OCI-LY7 (cell line): ENCODE measurements at regions of chr14 and their contacts with region 1.

Region 1: GRCh38 chr14:50860478-50861086 is 11.3 kb upstream of the ABHD12B start:
- DNase-seq: peak; percentile 87
- H3K4me3 ChIP-seq: peak overlapping the region; percentile 68
- H3K27ac ChIP-seq: peak overlapping the region; percentile 62
- H3K4me1 ChIP-seq: peaks cover 39% of the 10 kb centered on the region
- CTCF ChIP-seq: peak; percentile 82

Region 2: DNA sequence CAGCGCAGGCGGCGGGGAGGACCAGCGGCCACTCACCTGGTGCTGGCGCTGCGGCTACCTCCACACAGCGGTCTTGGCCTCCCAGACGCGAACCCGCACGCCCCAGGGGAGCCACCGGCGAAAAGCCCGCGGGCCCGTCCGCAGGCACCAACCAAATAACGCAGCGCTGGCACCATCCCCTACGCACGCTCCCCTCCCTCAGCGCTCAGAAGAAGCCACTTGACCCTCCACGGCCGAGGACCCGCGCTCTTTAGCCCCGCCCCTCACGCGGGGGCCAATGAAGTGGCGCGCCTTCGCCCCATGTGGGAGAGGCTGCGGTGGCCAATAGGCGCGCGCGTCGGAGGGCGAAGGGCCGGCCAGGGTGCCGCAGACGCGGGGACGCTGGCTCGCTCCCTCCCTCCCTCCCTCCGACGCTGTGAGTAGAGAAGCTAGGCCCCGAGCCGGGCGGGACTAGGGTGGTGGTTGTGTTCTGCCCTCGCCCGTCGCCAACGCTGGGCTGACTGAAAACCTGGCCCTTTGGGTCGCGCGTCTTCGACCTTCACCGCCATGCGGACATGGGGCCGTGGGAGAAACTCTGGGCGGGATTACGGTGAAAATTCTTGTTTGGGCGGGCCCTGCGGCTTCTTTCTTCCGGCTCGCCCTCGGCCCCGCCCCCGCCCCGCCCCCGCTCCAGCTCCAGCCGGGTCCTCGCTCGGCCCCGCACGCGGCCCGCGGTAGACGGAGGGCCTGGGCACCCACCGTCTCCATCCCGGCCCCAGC is 548.4 kb before region 1 on chr14 and contains the starts of genes DMAC2L and L2HGDH:
- CTCF ChIA-PET with region 1: no interaction called
- POLR2A ChIA-PET with region 1: no interaction called
- intact Hi-C with region 1: loop called (anchors 5 kb)
- DNase-seq: peak; percentile 97
- H3K4me3 ChIP-seq: peak within 1 kb of the TSS; percentile 73
- H3K27ac ChIP-seq: peak within 1 kb of the TSS; percentile 77
- H3K4me1 ChIP-seq: peaks cover 16% of the 10 kb centered on the region
- CTCF ChIP-seq: 0 out of 2 replicates have a peak, but pooled peaks have one; percentile 3
- total RNA-seq, gene DMAC2L: 5.8 and 13.8 TPM in 2 replicates
- total RNA-seq, gene L2HGDH: 8.7 and 10.0 TPM in 2 replicates

Region 3: DNA sequence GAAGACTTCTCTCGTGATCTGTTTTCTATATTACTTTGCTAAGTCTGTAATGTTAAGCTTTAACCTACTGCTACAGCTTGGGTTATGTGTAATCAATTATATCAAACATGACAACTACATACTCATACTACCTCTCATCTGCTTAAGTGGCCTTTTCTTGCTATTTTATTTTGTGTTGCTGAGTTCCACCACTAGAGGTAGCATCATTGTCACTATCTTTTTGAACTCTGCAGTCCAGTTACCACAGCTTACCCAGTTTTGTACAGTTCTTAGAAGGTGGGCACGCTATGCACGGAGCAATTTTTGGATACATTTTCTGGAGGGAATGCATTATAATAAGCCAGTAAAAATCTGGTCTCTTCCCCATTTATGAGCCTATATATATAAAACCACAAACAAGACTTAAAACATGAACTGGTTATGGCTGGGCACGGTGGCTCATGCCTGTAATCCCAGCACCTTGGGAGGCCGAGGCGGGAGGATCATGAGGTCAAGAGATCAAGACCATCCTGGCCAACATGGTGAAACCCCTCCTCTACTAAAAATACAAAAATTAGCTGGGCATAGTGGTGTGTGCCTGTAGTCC is 240.9 kb before region 1 on chr14:
- CTCF ChIA-PET with region 1: interaction called, 6 read pairs
- POLR2A ChIA-PET with region 1: no interaction called
- intact Hi-C with region 1: loop called (anchors 1 kb)
- DNase-seq: peak; percentile 53
- H3K4me3 ChIP-seq: no peak overlapping the region
- H3K27ac ChIP-seq: no peak overlapping the region
- H3K4me1 ChIP-seq: no peaks in the 10 kb centered on the region
- CTCF ChIP-seq: peak; percentile 84

Region 4: GRCh38 chr14:50773632-50774541 is 86.7 kb before region 1 on chr14:
- CTCF ChIA-PET with region 1: interaction called, 10 read pairs
- POLR2A ChIA-PET with region 1: interaction called, 20 read pairs
- intact Hi-C with region 1: loop called (anchors 1 kb)
- DNase-seq: peak; percentile 30
- H3K4me3 ChIP-seq: no peak overlapping the region
- H3K27ac ChIP-seq: no peak overlapping the region
- H3K4me1 ChIP-seq: peaks cover 14% of the 10 kb centered on the region
- CTCF ChIP-seq: peak; percentile 82

Region 5: DNA sequence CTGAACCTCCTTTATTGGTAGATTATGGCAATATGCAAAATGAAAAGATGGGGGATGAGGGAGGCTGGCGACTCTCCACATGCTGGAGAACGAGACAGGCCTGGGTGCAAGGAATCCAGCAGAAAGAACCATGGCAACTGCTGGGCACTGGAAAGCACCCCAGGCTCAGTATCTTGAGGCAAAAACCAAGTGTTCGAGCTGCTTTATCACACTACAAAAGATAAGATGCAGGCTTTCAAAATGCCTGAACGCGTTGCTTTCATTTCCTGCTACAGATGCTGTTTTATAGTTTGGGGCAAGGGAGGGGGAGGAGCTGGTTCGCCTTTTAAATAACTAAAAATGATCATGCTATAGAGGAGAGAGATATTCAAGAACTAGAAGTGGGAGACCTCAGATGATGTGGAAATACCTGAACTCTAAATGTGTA is 68.5 kb before region 1 on chr14:
- CTCF ChIA-PET with region 1: interaction called, 32 read pairs
- POLR2A ChIA-PET with region 1: interaction called, 78 read pairs
- intact Hi-C with region 1: loop called (anchors 1 kb)
- DNase-seq: peak; percentile 71
- H3K4me3 ChIP-seq: peak overlapping the region; percentile 61
- H3K27ac ChIP-seq: peak overlapping the region; percentile 97
- H3K4me1 ChIP-seq: peaks cover 100% of the 10 kb centered on the region
- CTCF ChIP-seq: no peak

Region 6: GRCh38 chr14:50839048-50839447 is 21.5 kb before region 1 on chr14:
- CTCF ChIA-PET with region 1: no interaction called
- POLR2A ChIA-PET with region 1: interaction called, 17 read pairs
- intact Hi-C with region 1: no loop called
- DNase-seq: no peak
- H3K4me3 ChIP-seq: no peak overlapping the region
- H3K27ac ChIP-seq: no peak overlapping the region
- H3K4me1 ChIP-seq: peaks cover 39% of the 10 kb centered on the region
- CTCF ChIP-seq: no peak